GM12878 (cell line): ENCODE measurements at regions of chr3 and their contacts with region 1.

Region 1: GRCh38 chr3:124761250-124761796 is 31.1 kb downstream of the UMPS start:
- DNase-seq: peak; percentile 49
- ATAC-seq: peak; percentile 91
- H3K4me3 ChIP-seq: no peak overlapping the region
- H3K27ac ChIP-seq: no peak overlapping the region
- H3K4me1 ChIP-seq: no peaks in the 10 kb centered on the region
- H3K27me3 ChIP-seq: no peaks in the 10 kb centered on the region; a peak in 2 of 4 replicates
- CTCF ChIP-seq: peak; percentile 94 to 96 (median 94)
- EP300 ChIP-seq: no peak
- POLR2A ChIP-seq: no peak
- RAD21 ChIP-seq: peak; percentile 93

Region 2: GRCh38 chr3:124741027-124741426 is 20.3 kb before region 1 on chr3:
- CTCF ChIA-PET with region 1: interaction called, 16 read pairs
- POLR2A ChIA-PET with region 1: no interaction called
- RAD21 ChIA-PET with region 1: interaction called, 5 read pairs
- SMC1A ChIA-PET with region 1: interaction called, 3 read pairs
- in situ Hi-C with region 1: no loop called
- intact Hi-C with region 1: no loop called
- DNase-seq: no peak
- ATAC-seq: no peak
- H3K4me3 ChIP-seq: no peak overlapping the region
- H3K27ac ChIP-seq: no peak overlapping the region
- H3K4me1 ChIP-seq: no peaks in the 10 kb centered on the region
- H3K27me3 ChIP-seq: no peaks in the 10 kb centered on the region
- CTCF ChIP-seq: no peak
- EP300 ChIP-seq: no peak
- POLR2A ChIP-seq: no peak
- RAD21 ChIP-seq: no peak

Region 3: GRCh38 chr3:124791639-124792151 is 30.4 kb after region 1 on chr3:
- CTCF ChIA-PET with region 1: interaction called, 59 read pairs
- POLR2A ChIA-PET with region 1: no interaction called
- RAD21 ChIA-PET with region 1: interaction called, 12 read pairs
- SMC1A ChIA-PET with region 1: interaction called, 22 read pairs
- in situ Hi-C with region 1: no loop called
- intact Hi-C with region 1: no loop called
- DNase-seq: no peak
- ATAC-seq: peak; percentile 36; the same call in 2 of the 3 replicates
- H3K4me3 ChIP-seq: no peak overlapping the region
- H3K27ac ChIP-seq: no peak overlapping the region
- H3K4me1 ChIP-seq: no peaks in the 10 kb centered on the region
- H3K27me3 ChIP-seq: no peaks in the 10 kb centered on the region
- CTCF ChIP-seq: no peak
- EP300 ChIP-seq: no peak
- POLR2A ChIP-seq: no peak
- RAD21 ChIP-seq: no peak

Region 4: DNA sequence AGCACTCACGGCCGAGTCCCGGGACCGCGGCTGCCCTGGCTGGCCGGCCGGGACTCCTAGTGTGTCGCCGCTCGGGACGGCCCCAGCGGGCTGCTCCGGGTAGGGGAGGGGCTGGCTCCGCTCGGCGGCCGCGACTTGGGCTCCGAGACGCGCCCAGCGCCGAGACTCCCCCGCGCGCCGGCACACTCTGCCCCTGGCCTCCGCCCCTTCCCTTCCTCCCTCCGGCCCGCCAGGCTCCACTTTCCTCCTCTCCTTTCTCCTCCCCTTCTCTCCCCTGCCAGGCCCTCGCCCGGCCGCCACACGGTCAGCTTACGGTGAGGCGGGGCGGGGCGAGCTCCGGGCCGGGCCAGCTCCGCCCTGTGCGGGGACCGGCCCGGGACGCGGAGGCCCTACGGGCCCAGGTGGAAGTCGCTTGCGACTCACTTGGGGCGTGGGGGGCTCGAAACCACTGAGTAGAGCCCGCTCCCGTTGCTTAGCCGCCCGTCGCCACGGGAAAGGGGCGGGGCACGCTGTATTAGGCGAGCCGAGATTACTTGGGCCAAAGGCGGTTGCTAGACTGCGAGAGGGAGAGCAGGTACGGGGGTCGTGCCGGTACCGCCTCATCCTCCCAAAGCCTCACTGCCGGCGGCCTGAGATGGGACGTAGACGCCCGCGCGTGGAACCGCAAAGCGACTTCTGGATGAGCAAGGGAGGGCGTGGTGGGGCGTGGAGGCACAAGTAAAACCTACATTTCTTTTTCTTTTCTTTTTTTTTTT is 126.0 kb after region 1 on chr3 and contains the start of gene ITGB5:
- CTCF ChIA-PET with region 1: interaction called, 25 read pairs
- POLR2A ChIA-PET with region 1: no interaction called
- RAD21 ChIA-PET with region 1: interaction called, 6 read pairs
- SMC1A ChIA-PET with region 1: interaction called, 12 read pairs
- in situ Hi-C with region 1: no loop called
- intact Hi-C with region 1: no loop called
- DNase-seq: no peak
- ATAC-seq: peak; percentile 81
- H3K4me3 ChIP-seq: peak within 1 kb of the TSS; percentile 84
- H3K27ac ChIP-seq: no peak within 1 kb of the TSS
- H3K4me1 ChIP-seq: no peaks in the 10 kb centered on the region
- H3K27me3 ChIP-seq: peaks cover 0 to 4% of the 10 kb centered on the region in 2 experiments; a peak in 3 of 4 replicates
- CTCF ChIP-seq: no peak
- EP300 ChIP-seq: no peak
- POLR2A ChIP-seq: no peak
- RAD21 ChIP-seq: no peak
- polyA plus RNA-seq, gene ITGB5: 0.05 to 0.26 TPM

Region 5: GRCh38 chr3:124905849-124906248 is 144.5 kb after region 1 on chr3:
- CTCF ChIA-PET with region 1: interaction called, 551 read pairs
- POLR2A ChIA-PET with region 1: interaction called, 4 read pairs
- RAD21 ChIA-PET with region 1: interaction called, 174 read pairs
- SMC1A ChIA-PET with region 1: interaction called, 242 read pairs
- in situ Hi-C with region 1: loop called (anchors 5 kb)
- intact Hi-C with region 1: loop called (anchors 1 kb)
- DNase-seq: no peak
- ATAC-seq: no peak
- H3K4me3 ChIP-seq: no peak overlapping the region
- H3K27ac ChIP-seq: no peak overlapping the region
- H3K4me1 ChIP-seq: no peaks in the 10 kb centered on the region
- H3K27me3 ChIP-seq: no peaks in the 10 kb centered on the region; a peak in 2 of 4 replicates
- CTCF ChIP-seq: no peak
- EP300 ChIP-seq: no peak
- POLR2A ChIP-seq: no peak
- RAD21 ChIP-seq: no peak

Region 6: GRCh38 chr3:124935264-124935663 is 173.9 kb after region 1 on chr3:
- CTCF ChIA-PET with region 1: interaction called, 17 read pairs
- POLR2A ChIA-PET with region 1: no interaction called
- RAD21 ChIA-PET with region 1: interaction called, 8 read pairs
- SMC1A ChIA-PET with region 1: interaction called, 3 read pairs
- in situ Hi-C with region 1: no loop called
- intact Hi-C with region 1: no loop called
- DNase-seq: no peak
- ATAC-seq: peak; percentile 89
- H3K4me3 ChIP-seq: no peak overlapping the region
- H3K27ac ChIP-seq: no peak overlapping the region
- H3K4me1 ChIP-seq: no peaks in the 10 kb centered on the region
- H3K27me3 ChIP-seq: no peaks in the 10 kb centered on the region; a peak in 1 of 4 replicates
- CTCF ChIP-seq: no peak
- EP300 ChIP-seq: no peak
- POLR2A ChIP-seq: no peak
- RAD21 ChIP-seq: no peak

Region 7: DNA sequence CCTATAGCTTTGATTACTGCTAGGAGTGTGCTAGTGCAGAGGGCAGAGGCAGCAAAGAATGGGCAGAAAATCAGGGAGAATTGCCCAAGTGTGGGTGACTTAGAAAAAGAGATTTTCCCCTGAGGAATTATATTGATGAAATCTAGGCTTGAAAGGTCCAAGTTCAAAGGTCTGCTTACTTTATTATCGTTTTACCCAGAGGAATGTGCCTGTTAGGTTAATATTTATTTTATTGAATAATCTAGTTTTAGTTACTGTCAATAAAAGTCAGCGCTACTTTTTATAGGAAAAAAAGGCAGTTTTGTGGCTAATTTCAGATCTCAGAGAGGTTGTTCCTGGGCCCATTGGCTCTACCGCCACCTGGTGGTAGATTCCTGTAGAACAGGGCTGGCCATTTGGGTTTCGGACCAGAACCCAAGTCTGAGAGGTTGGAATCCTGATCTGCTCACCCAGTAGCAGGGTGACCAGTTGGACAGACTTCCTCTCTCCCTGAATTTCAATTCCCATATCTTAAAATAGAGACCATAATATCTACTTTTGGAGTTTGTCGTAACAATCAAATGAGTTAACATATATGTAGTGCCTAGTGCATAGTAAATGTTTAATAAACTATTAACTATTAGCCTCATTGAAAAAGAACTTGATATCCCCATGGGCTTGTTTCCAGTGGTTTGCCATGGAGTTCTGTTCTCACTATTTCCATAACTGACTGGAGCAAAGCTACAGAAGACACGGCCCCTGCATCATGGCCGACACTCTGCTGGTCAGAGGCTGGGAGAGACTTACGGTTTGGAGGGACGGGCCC is 676.5 kb after region 1 on chr3:
- CTCF ChIA-PET with region 1: interaction called, 17 read pairs
- POLR2A ChIA-PET with region 1: no interaction called
- RAD21 ChIA-PET with region 1: interaction called, 4 read pairs
- SMC1A ChIA-PET with region 1: interaction called, 7 read pairs
- in situ Hi-C with region 1: loop called (anchors 5 kb)
- intact Hi-C with region 1: loop called (anchors 2 kb)
- DNase-seq: no peak
- ATAC-seq: peak; percentile 45
- H3K4me3 ChIP-seq: no peak overlapping the region
- H3K27ac ChIP-seq: no peak overlapping the region
- H3K4me1 ChIP-seq: peaks cover 19% of the 10 kb centered on the region
- H3K27me3 ChIP-seq: no peaks in the 10 kb centered on the region
- CTCF ChIP-seq: peak; percentile 92 to 96 (median 92)
- EP300 ChIP-seq: no peak
- POLR2A ChIP-seq: no peak
- RAD21 ChIP-seq: peak; percentile 97

Region 8: GRCh38 chr3:125480656-125481374 is 719.5 kb after region 1 on chr3:
- CTCF ChIA-PET with region 1: no interaction called
- POLR2A ChIA-PET with region 1: no interaction called
- RAD21 ChIA-PET with region 1: no interaction called
- SMC1A ChIA-PET with region 1: no interaction called
- in situ Hi-C with region 1: no loop called
- intact Hi-C with region 1: no loop called
- DNase-seq: no peak
- ATAC-seq: no peak
- H3K4me3 ChIP-seq: no peak overlapping the region
- H3K27ac ChIP-seq: no peak overlapping the region
- H3K4me1 ChIP-seq: no peaks in the 10 kb centered on the region
- H3K27me3 ChIP-seq: no peaks in the 10 kb centered on the region
- CTCF ChIP-seq: no peak
- EP300 ChIP-seq: no peak
- POLR2A ChIP-seq: no peak
- RAD21 ChIP-seq: no peak